Ovary (tissue), 10 donors: ENCODE measurements at regions of chr1 and their contacts with region 1.

Region 1: DNA sequence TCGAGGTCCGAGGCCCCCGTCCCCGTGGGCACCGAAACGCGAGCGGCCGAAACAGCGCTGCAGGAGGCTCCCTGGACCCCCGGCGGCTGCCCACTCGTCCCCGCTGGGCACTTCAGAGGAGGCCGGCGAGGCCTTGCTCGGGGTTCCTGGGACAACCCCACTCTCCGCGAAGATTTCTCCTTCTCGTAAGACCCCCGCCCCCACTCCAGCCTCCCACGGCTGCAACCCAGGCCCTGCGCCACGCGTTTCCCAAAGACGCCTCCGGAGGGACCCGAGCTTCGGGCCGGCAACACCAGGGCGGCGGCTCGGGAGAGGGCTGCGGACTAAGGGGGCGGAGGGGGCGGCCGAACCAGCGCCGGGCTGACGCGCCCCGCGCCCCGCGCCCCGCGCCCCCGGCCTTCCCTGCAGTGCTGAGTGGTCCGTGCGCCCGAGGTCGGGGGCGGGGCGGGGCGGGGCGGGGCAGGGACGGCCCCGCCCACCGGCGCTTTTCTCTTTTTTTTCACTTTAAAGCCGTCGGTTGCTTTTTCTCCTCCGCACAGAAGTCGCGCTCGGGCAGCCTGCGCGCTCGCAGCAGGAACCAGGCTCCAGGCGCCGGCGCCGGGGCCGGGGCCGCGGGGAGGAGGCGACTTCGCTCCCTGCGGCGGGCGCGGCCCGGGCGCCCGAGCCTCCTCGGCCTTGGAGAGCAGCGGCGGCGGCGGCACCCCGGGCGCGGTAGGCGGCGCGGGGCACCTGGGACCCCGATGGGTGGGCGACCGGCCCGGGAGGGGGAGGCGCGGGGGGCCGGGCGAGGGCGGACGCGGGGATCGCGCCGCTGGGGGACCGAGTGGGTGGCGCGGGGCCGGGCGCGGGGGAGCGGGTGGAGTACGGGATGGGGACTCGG is at the start of gene SPSB1:
- DNase-seq: peak; percentile 76 to 85 (median 83)
- H3K4me3 ChIP-seq: peak within 1 kb of the TSS; percentile 75
- H3K27ac ChIP-seq: peak within 1 kb of the TSS; percentile 51 to 90
- H3K4me1 ChIP-seq: peaks cover 13% of the 10 kb centered on the region
- H3K27me3 ChIP-seq: no peaks in the 10 kb centered on the region
- CTCF ChIP-seq: no peak
- EP300 ChIP-seq: no peak
- POLR2A ChIP-seq: peak; percentile 74
- total RNA-seq, gene SPSB1: 20.6 to 69.6 (median 34.4) TPM

Region 2: GRCh38 chr1:9371391-9371935 is 78.9 kb after region 1 on chr1:
- intact Hi-C with region 1: loop called in 2 of 4 experiments (anchors 2 to 5 kb)
- DNase-seq: peak; percentile 60 to 86 (median 78)
- H3K4me3 ChIP-seq: no peak overlapping the region
- H3K27ac ChIP-seq: peak overlapping the region; percentile 14 to 55
- H3K4me1 ChIP-seq: peaks cover 40% of the 10 kb centered on the region
- H3K27me3 ChIP-seq: no peaks in the 10 kb centered on the region
- CTCF ChIP-seq: no peak
- EP300 ChIP-seq: no peak
- POLR2A ChIP-seq: no peak

Region 3: GRCh38 chr1:9438431-9439073 is 146.0 kb after region 1 on chr1:
- intact Hi-C with region 1: loop called in 1 of 4 experiments (anchors 5 kb)
- DNase-seq: peak; percentile 52 to 73 (median 66)
- H3K4me3 ChIP-seq: no peak overlapping the region
- H3K27ac ChIP-seq: peak overlapping the region in 1 of 2 donors; percentile 28
- H3K4me1 ChIP-seq: peaks cover 14% of the 10 kb centered on the region
- H3K27me3 ChIP-seq: no peaks in the 10 kb centered on the region
- CTCF ChIP-seq: no peak
- EP300 ChIP-seq: no peak
- POLR2A ChIP-seq: no peak

Region 4: GRCh38 chr1:9455487-9456234 is 163.1 kb after region 1 on chr1:
- intact Hi-C with region 1: loop called in 2 of 4 experiments (anchors 5 to 10 kb)
- DNase-seq: peak; percentile 80 to 90 (median 86)
- H3K4me3 ChIP-seq: no peak overlapping the region
- H3K27ac ChIP-seq: peak overlapping the region in 1 of 2 donors; percentile 9
- H3K4me1 ChIP-seq: peaks cover 10% of the 10 kb centered on the region
- H3K27me3 ChIP-seq: no peaks in the 10 kb centered on the region
- CTCF ChIP-seq: peak; percentile 49 to 88 (median 80)
- EP300 ChIP-seq: no peak
- POLR2A ChIP-seq: no peak

Region 5: GRCh38 chr1:9476790-9477463 is 184.3 kb after region 1 on chr1:
- intact Hi-C with region 1: loop called in 1 of 4 experiments (anchors 5 kb)
- DNase-seq: no peak
- H3K4me3 ChIP-seq: no peak overlapping the region
- H3K27ac ChIP-seq: no peak overlapping the region
- H3K4me1 ChIP-seq: peaks cover 4% of the 10 kb centered on the region
- H3K27me3 ChIP-seq: no peaks in the 10 kb centered on the region
- CTCF ChIP-seq: no peak
- EP300 ChIP-seq: no peak
- POLR2A ChIP-seq: no peak

Region 6: GRCh38 chr1:9494929-9495758 is 202.5 kb after region 1 on chr1:
- intact Hi-C with region 1: loop called in 2 of 4 experiments (anchors 2 to 5 kb)
- DNase-seq: peak; percentile 45 to 82 (median 64)
- H3K4me3 ChIP-seq: no peak overlapping the region
- H3K27ac ChIP-seq: no peak overlapping the region
- H3K4me1 ChIP-seq: no peaks in the 10 kb centered on the region
- H3K27me3 ChIP-seq: no peaks in the 10 kb centered on the region
- CTCF ChIP-seq: peak; percentile 88 to 96 (median 94)
- EP300 ChIP-seq: no peak
- POLR2A ChIP-seq: no peak

Region 7: GRCh38 chr1:9573723-9574122 is 281.1 kb after region 1 on chr1:
- intact Hi-C with region 1: loop called in 1 of 4 experiments (anchors 10 kb)
- DNase-seq: no peak
- H3K4me3 ChIP-seq: no peak overlapping the region
- H3K27ac ChIP-seq: no peak overlapping the region
- H3K4me1 ChIP-seq: peaks cover 2% of the 10 kb centered on the region
- H3K27me3 ChIP-seq: no peaks in the 10 kb centered on the region
- CTCF ChIP-seq: peak in 2 of 3 donors; percentile 29 to 44
- EP300 ChIP-seq: no peak
- POLR2A ChIP-seq: no peak